PC-9 (cell line): ENCODE measurements at regions of chr2 and their contacts with region 1.

Region 1: GRCh38 chr2:232794981-232795380 is 18.6 kb upstream of the KCNJ13 start:
- DNase-seq: peak in 1 of 2 experiments; percentile 75
- H3K4me3 ChIP-seq: no peak overlapping the region
- H3K27ac ChIP-seq: peak overlapping the region; percentile 71
- H3K4me1 ChIP-seq: peaks cover 21% of the 10 kb centered on the region
- H3K27me3 ChIP-seq: no peaks in the 10 kb centered on the region
- CTCF ChIP-seq: no peak

Region 2: GRCh38 chr2:232809349-232810124 is 14.6 kb after region 1 on chr2:
- CTCF ChIA-PET with region 1: no interaction called
- POLR2A ChIA-PET with region 1: interaction called, 11 read pairs
- intact Hi-C with region 1: no loop called
- DNase-seq: no peak
- H3K4me3 ChIP-seq: no peak overlapping the region
- H3K27ac ChIP-seq: no peak overlapping the region
- H3K4me1 ChIP-seq: 0 out of 2 replicates have a peak, but pooled peaks cover 7% of the 10 kb centered on the region
- H3K27me3 ChIP-seq: no peaks in the 10 kb centered on the region
- CTCF ChIP-seq: peak; percentile 51